Right ventricle myocardium superior (tissue), 1 donor: ENCODE measurements at regions of chr1 and their contacts with region 1.

Region 1: DNA sequence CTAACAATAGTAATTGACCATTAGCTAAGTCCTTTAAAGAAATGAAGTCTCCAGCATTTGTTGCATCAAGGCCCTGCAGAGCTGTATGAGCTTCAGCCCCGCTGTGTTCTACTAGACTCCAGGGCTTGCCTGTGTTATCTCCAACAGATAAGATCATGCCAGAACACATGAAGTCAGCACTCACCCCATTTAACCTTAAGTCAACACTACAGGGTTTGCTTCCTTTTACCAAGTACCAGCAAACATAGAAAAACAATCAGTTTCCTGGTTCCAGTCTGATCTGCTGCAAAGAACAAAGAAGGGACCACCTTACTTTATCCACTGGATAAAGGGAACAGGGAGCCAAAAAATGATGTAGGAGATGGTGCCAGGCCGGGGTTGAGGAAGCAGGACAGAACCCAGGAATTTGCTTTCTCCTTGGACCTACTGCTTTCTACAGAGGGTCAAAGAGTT is 41.3 kb upstream of the ENAH start:
- DNase-seq: peak; percentile 55
- ATAC-seq: peak; percentile 93

Region 2: GRCh38 chr1:225480825-225481434 is 213.2 kb before region 1 on chr1:
- intact Hi-C with region 1: no loop called
- DNase-seq: no peak
- ATAC-seq: peak; percentile 61

Region 3: DNA sequence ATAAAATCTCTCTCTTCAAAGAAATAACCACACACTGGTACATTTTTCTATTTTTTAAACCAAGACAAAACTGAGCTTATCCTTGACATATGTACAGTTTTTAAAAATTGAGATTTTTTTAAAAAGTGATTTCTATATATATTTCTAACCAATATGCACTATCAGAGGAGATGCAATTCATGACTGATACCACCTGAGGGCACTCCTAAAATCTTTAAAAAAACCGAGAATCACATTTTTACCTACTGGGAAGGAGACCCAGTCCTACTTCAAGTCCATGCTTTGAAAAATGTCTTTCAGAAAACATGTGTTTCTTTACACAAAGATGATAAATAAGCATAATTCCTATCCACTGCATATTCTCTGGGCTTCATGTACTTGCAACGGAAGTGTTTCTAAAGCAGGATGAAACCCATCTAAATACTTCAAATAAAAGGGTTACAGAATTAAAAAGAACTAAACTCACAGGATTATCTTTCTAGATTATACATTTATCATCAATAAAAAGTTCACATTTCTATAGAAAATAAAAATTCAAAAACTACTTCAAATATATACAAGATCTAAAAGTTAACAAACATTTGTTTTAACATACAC is 139.9 kb before region 1 on chr1:
- intact Hi-C with region 1: no loop called
- DNase-seq: no peak
- ATAC-seq: peak; percentile 61

Region 4: GRCh38 chr1:225737196-225737595 is 43.0 kb after region 1 on chr1:
- intact Hi-C with region 1: no loop called
- DNase-seq: no peak
- ATAC-seq: no peak

Region 5: GRCh38 chr1:225754940-225755641 is 60.9 kb after region 1 on chr1:
- intact Hi-C with region 1: loop called (anchors 10 kb)
- DNase-seq: peak; percentile 58
- ATAC-seq: peak; percentile 67